Psoas muscle (tissue), 8 donors: ENCODE measurements at regions of chr1 and their contacts with region 1.

Region 1: DNA sequence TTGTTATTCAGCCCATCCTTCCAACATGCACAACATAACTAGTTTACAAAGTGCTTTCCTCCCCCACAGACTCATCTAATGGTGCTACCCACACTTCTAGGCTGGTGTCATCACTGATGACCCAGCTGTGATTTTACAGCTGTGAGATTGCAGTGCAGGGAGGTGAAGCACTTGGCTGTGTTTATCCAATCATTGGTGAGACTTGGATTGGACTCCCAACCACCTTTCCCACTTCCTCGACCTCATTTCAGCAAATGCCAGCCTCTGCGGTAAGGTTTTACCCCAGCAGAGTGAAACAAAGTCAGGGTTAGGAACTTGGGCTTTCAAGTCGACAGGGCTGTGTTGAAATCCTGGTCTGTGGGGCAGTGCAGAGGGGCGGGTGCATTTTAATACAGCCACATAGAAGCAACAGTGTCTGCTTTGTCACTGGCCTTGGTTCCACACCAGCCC is 22.1 kb downstream of the ECHDC2 start:
- DNase-seq: no peak
- ATAC-seq: no peak
- H3K4me3 ChIP-seq: no peak overlapping the region
- H3K27ac ChIP-seq: no peak overlapping the region
- H3K4me1 ChIP-seq: peaks cover 1% of the 10 kb centered on the region
- H3K27me3 ChIP-seq: no peaks in the 10 kb centered on the region
- CTCF ChIP-seq: no peak

Region 2: GRCh38 chr1:52792036-52792435 is 107.4 kb before region 1 on chr1:
- intact Hi-C with region 1: no loop called
- DNase-seq: no peak
- ATAC-seq: no peak
- H3K4me3 ChIP-seq: no peak overlapping the region
- H3K27ac ChIP-seq: no peak overlapping the region
- H3K4me1 ChIP-seq: no peaks in the 10 kb centered on the region
- H3K27me3 ChIP-seq: no peaks in the 10 kb centered on the region
- CTCF ChIP-seq: no peak

Region 3: GRCh38 chr1:53069663-53070327 is 170.3 kb after region 1 on chr1:
- intact Hi-C with region 1: loop called in 1 of 2 experiments (anchors 5 kb)
- DNase-seq: peak in 1 of 2 donors; percentile 41
- ATAC-seq: no peak
- H3K4me3 ChIP-seq: no peak overlapping the region
- H3K27ac ChIP-seq: no peak overlapping the region
- H3K4me1 ChIP-seq: no peaks in the 10 kb centered on the region
- H3K27me3 ChIP-seq: no peaks in the 10 kb centered on the region
- CTCF ChIP-seq: no peak

Region 4: DNA sequence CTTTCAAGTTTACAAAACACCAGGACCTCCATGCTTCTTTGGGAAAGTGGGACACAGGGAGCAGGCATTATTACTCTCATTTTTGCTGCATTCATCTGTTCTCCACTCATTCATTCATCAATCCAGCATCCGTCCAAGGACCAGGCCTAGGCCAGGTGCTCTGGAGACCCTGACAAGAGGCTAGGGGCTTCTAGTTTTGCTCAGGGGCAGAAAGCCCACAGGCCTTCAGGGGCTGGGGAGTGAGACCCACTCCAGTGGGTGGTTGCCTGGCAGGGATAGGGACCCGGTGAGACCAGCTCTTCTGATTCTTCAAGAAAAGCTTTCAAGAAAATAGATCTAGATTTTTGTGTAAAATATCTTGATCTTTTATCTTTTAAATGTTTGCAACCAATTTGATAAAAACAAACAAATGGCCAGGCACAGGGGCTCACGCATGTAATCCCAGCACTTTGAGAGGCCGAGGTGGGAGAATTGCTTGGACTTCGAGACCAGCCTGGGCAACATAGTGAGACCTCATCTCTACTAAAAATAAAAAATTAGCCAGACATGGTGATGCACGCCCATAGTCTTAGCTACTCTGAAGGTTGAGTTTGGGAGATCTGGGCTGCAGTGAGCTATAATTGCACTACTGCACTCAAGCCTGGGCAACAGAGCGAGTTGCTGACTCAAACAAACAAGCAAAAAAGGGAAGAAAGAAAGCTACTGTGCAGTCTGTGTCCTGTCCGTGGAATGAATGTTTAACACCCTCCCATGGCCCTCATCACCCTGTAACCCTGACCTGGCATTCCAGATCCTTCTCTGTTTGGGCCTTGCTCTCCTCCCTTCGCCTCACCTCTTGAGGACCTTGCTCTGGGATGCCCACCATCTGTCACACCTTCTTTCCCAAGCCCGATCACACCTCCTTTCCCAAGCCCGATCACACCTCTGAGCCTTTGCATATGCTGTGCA is 445.7 kb after region 1 on chr1:
- intact Hi-C with region 1: no loop called
- DNase-seq: no peak
- ATAC-seq: no peak
- H3K4me3 ChIP-seq: no peak overlapping the region
- H3K27ac ChIP-seq: no peak overlapping the region
- H3K4me1 ChIP-seq: no peaks in the 10 kb centered on the region
- H3K27me3 ChIP-seq: no peaks in the 10 kb centered on the region
- CTCF ChIP-seq: no peak